ENCODE measurements at regions of chr17 and their contacts with region 1.

Region 1: GRCh38 chr17:46266656-46267544 is 28.0 kb upstream of the LRRC37A start:
- DNase-seq: peak; percentile 84 to 93
- H3K4me3 ChIP-seq: peak overlapping the region; percentile 77
- H3K4me3 Mint-ChIP-seq: peak overlapping the region; percentile 75
- H3K27ac Mint-ChIP-seq: peak overlapping the region; percentile 84
- H3K4me1 ChIP-seq: peaks cover 18% of the 10 kb centered on the region
- H3K4me1 Mint-ChIP-seq: peaks cover 29% of the 10 kb centered on the region
- H3K27me3 ChIP-seq: no peaks in the 10 kb centered on the region
- H3K27me3 Mint-ChIP-seq: no peaks in the 10 kb centered on the region
- CTCF ChIP-seq: peak in 1 of 2 experiments; percentile 17

Region 2: DNA sequence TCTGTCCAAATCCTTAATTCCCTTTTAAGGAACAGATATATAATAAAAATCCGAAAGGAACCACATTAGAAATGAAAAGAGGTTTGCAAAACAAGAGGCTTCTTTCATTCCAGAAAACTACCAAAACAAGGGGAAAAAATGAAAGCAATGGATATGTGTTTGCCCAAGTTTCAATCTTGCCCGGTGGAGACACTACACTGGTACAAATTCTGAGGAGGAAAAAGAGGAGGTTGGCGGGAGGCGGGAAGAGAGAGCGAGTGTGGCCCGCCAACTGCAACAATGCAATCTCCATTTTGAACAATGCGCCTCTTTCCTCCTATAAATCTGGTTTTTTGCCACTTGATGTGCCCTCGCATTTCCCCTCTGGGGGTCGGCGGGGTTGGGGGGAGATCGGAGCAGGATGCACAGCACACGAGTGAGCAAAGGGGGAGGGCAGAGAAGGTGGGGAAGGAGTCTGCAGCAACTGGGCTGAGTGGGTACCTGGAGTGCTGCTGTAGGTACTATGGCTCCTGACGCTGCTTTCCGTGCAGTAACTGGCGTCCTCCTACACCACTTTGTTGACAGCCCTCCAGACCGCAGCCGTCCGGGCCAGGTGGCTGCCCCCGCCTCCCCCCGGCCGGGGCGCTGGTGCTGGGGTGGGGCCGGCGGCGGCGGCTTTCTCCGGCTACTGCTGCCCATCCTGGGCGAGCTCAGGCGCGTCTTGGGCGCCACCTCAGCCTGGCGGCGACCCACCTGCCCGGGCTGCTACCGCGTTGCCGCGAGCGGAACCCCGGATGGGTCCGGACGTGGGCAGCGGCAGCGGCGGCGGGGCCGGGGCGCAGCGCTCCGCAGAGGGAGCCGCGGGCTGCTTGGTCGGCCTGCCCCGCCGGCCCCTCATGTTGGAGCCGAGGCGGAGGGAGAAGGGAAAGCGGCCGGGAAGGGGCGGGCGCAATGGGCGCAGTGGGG is 682.5 kb before region 1 on chr17:
- CTCF ChIA-PET with region 1: no interaction called
- POLR2A ChIA-PET with region 1: interaction called, 6 read pairs
- intact Hi-C with region 1: loop called (anchors 5 kb)
- DNase-seq: peak; percentile 61 to 72
- H3K4me3 ChIP-seq: peak overlapping the region; percentile 93
- H3K4me3 Mint-ChIP-seq: peak overlapping the region; percentile 85
- H3K27ac Mint-ChIP-seq: peak overlapping the region; percentile 79
- H3K4me1 ChIP-seq: no peaks in the 10 kb centered on the region
- H3K4me1 Mint-ChIP-seq: no peaks in the 10 kb centered on the region
- H3K27me3 ChIP-seq: no peaks in the 10 kb centered on the region
- H3K27me3 Mint-ChIP-seq: no peaks in the 10 kb centered on the region
- CTCF ChIP-seq: no peak

Region 3: DNA sequence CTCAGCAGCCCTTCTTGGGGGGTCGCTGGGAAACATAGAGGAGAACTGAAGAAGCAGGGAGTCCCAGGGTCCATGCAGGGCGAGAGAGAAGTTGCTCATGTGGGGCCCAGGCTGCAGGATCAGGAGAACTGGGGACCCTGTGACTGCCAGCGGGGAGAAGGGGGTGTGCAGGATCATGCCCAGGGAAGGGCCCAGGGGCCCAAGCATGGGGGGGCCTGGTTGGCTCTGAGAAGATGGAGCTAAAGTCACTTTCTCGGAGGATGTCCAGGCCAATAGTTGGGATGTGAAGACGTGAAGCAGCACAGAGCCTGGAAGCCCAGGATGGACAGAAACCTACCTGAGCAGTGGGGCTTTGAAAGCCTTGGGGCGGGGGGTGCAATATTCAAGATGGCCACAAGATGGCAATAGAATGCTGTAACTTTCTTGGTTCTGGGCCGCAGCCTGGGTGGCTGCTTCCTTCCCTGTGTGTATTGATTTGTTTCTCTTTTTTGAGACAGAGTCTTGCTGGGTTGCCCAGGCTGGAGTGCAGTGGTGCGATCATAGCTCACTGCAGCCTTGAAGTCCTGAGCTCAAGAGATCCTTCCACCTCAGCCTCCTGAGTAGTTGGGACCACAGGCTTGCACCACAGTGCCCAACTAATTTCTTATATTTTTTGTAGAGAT is 264.5 kb before region 1 on chr17:
- CTCF ChIA-PET with region 1: no interaction called
- POLR2A ChIA-PET with region 1: no interaction called
- intact Hi-C with region 1: loop called (anchors 10 kb)
- DNase-seq: peak; percentile 73 to 84
- H3K4me3 ChIP-seq: no peak overlapping the region
- H3K4me3 Mint-ChIP-seq: no peak overlapping the region
- H3K27ac Mint-ChIP-seq: no peak overlapping the region
- H3K4me1 ChIP-seq: no peaks in the 10 kb centered on the region
- H3K4me1 Mint-ChIP-seq: peaks cover 6% of the 10 kb centered on the region
- H3K27me3 ChIP-seq: no peaks in the 10 kb centered on the region
- H3K27me3 Mint-ChIP-seq: no peaks in the 10 kb centered on the region
- CTCF ChIP-seq: peak; percentile 87 to 97

Region 4: DNA sequence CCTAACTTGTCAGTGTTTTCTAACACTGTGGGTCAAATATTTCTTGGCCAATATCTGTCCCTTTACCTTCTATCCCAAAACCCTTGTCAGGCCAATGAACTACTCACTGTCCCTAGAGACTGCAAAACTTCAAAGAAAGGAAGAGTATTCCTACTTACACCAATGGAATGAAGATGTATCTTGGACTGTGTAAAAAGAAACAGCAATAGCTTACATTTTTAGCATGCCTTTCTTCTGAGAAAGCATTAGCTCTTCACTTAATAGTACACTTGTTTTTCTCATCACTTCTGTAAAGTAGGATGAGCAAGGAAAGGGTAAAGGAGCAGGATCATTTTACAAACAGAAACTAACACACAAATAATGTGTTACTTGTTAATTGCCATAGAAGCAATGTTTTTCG is 193.9 kb before region 1 on chr17:
- CTCF ChIA-PET with region 1: no interaction called
- POLR2A ChIA-PET with region 1: no interaction called
- intact Hi-C with region 1: no loop called
- DNase-seq: no peak
- H3K4me3 ChIP-seq: no peak overlapping the region
- H3K4me3 Mint-ChIP-seq: peak overlapping the region; percentile 45
- H3K27ac Mint-ChIP-seq: peak overlapping the region; percentile 92
- H3K4me1 ChIP-seq: peaks cover 40% of the 10 kb centered on the region
- H3K4me1 Mint-ChIP-seq: peaks cover 30% of the 10 kb centered on the region
- H3K27me3 ChIP-seq: no peaks in the 10 kb centered on the region
- H3K27me3 Mint-ChIP-seq: no peaks in the 10 kb centered on the region
- CTCF ChIP-seq: no peak

Region 5: GRCh38 chr17:46167826-46168569 is 98.9 kb before region 1 on chr17:
- CTCF ChIA-PET with region 1: no interaction called
- POLR2A ChIA-PET with region 1: no interaction called
- intact Hi-C with region 1: no loop called
- DNase-seq: peak in 1 of 2 experiments; percentile 11
- H3K4me3 ChIP-seq: no peak overlapping the region
- H3K4me3 Mint-ChIP-seq: peak overlapping the region; percentile 10
- H3K27ac Mint-ChIP-seq: no peak overlapping the region
- H3K4me1 ChIP-seq: peaks cover 26% of the 10 kb centered on the region
- H3K4me1 Mint-ChIP-seq: peaks cover 35% of the 10 kb centered on the region
- H3K27me3 ChIP-seq: no peaks in the 10 kb centered on the region
- H3K27me3 Mint-ChIP-seq: no peaks in the 10 kb centered on the region
- CTCF ChIP-seq: no peak

Region 6: DNA sequence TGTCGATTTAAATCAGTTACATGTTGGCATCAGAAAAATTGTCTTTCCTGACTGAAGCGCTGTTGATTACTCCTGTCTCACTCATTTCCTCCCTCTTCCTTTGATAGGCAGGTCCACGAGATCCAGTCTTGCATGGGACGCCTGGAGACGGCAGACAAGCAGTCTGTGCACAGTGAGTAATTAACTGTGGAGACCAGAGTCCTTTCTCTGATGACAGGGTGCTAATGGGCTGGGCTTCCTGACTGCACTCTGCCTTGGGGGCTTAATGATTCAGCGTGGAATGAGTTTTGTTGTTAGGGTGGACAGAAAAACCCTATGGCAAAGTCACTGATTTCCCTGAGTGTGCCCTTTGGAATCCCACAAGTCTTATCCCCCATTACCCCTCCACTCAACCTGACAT is 662.5 kb after region 1 on chr17:
- CTCF ChIA-PET with region 1: no interaction called
- POLR2A ChIA-PET with region 1: interaction called, 10 read pairs
- intact Hi-C with region 1: no loop called
- DNase-seq: no peak
- H3K4me3 ChIP-seq: no peak overlapping the region
- H3K4me3 Mint-ChIP-seq: no peak overlapping the region
- H3K27ac Mint-ChIP-seq: no peak overlapping the region
- H3K4me1 ChIP-seq: peaks cover 13% of the 10 kb centered on the region
- H3K4me1 Mint-ChIP-seq: peaks cover 15% of the 10 kb centered on the region
- H3K27me3 ChIP-seq: no peaks in the 10 kb centered on the region
- H3K27me3 Mint-ChIP-seq: no peaks in the 10 kb centered on the region
- CTCF ChIP-seq: no peak

Measured in Caco-2 (cell line).